Activated CD4-positive, alpha-beta memory T cell treated with anti-CD3 and anti-CD28 coated beads for 36 hours (primary cell): ENCODE measurements at regions of chrX and their contacts with region 1.

Region 1: GRCh38 chrX:112841114-112841819 is 636 bp upstream of the AMOT start:
- DNase-seq: peak; percentile 78
- H3K4me3 Mint-ChIP-seq: peak overlapping the region; percentile 80
- H3K27ac Mint-ChIP-seq: peak overlapping the region; percentile 49
- H3K4me1 Mint-ChIP-seq: peaks cover 13% of the 10 kb centered on the region
- H3K27me3 Mint-ChIP-seq: no peaks in the 10 kb centered on the region

Region 2: DNA sequence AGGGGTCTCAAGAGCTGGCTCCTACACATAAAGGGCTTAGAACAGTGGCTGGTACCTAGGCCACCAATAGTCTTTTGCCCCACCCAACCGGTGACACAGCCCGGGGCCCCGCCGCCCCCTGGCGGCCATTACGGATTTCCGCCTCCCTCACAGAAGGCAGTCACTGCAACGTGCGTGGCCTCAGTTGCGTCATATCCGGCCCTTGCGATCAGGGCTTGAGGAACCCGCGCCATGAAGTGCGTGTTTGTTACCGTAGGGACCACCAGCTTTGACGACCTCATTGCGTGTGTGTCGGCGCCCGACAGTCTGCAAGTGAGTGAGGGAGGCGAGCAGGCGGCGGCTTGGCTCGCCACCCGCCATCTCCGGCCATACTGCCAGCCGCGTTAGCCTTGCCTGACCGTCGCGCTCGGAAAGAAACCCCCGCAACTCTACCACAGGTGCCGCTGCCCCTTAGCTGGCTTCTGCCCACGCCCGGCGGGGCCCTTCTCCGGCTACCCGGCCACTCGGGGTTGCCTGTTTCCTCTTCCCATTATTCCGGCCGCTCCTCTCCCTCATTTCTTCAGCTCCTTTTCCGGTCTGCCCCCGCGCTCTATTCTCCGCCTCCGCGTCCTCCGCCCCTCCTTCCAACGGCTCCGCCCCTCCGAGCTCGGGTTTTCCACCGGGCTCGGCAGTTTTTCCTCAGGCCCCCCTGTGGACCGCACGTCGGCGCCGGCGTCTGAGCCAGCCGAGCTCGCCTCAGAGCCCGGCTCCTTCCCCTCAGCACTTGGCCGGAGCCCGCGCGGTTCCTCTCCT is 1160.1 kb before region 1 on chrX and contains the start of gene ALG13:
- CTCF ChIA-PET with region 1: no interaction called
- POLR2A ChIA-PET with region 1: no interaction called
- intact Hi-C with region 1: loop called (anchors 5 kb)
- DNase-seq: peak; percentile 89
- H3K4me3 Mint-ChIP-seq: peak within 1 kb of the TSS; percentile 81
- H3K27ac Mint-ChIP-seq: peak within 1 kb of the TSS; percentile 95
- H3K4me1 Mint-ChIP-seq: peaks cover 23% of the 10 kb centered on the region
- H3K27me3 Mint-ChIP-seq: no peaks in the 10 kb centered on the region
- total RNA-seq, gene ALG13: 40.1 to 45.4 TPM

Region 3: GRCh38 chrX:111928456-111928855 is 912.8 kb before region 1 on chrX:
- CTCF ChIA-PET with region 1: no interaction called
- POLR2A ChIA-PET with region 1: no interaction called
- intact Hi-C with region 1: no loop called
- DNase-seq: no peak
- H3K4me3 Mint-ChIP-seq: no peak overlapping the region
- H3K27ac Mint-ChIP-seq: no peak overlapping the region
- H3K4me1 Mint-ChIP-seq: no peaks in the 10 kb centered on the region
- H3K27me3 Mint-ChIP-seq: no peaks in the 10 kb centered on the region

Region 4: DNA sequence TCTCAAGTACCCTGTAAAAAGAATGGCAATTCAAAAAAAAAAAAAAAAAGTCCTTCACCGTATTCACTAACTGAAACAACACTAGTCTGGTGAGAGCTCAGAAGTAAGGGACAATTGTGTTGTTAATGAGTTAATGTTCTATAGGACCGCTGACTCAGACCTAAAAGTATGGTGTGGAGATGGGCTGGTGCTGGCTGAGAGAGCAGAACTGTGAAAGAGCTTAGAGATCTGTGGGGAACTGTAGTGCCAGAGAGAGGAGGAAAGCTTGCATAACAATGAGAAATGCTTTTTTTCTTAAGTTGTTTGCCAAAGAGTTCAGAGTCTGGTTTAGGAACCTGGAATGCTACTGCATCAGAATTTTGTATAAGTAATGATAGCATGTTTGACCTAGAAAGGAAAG is 226.6 kb before region 1 on chrX:
- CTCF ChIA-PET with region 1: no interaction called
- POLR2A ChIA-PET with region 1: no interaction called
- intact Hi-C with region 1: no loop called
- DNase-seq: no peak
- H3K4me3 Mint-ChIP-seq: no peak overlapping the region
- H3K27ac Mint-ChIP-seq: no peak overlapping the region
- H3K4me1 Mint-ChIP-seq: no peaks in the 10 kb centered on the region
- H3K27me3 Mint-ChIP-seq: no peaks in the 10 kb centered on the region

Region 5: DNA sequence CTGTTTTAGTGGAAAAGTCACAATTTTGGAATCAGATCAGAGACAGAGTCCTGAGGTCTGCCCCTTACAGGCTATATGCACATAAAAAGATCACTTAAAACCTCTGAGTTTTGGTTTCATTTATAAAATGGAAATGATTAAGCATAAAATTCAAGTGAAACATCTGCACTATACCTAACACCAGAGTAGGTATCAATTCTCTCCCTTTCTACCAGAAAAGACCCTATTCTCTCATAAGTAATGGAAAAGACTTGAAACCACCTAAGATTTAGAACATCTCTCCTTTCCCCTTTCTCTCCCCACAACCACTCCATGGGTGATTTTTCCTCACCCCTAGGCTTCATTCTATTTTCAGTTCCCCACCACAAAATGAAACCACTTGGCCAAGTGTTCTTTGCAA is 162.4 kb before region 1 on chrX:
- CTCF ChIA-PET with region 1: no interaction called
- POLR2A ChIA-PET with region 1: no interaction called
- intact Hi-C with region 1: loop called (anchors 2 kb)
- DNase-seq: no peak
- H3K4me3 Mint-ChIP-seq: peak overlapping the region; percentile 69
- H3K27ac Mint-ChIP-seq: peak overlapping the region; percentile 69
- H3K4me1 Mint-ChIP-seq: peaks cover 34% of the 10 kb centered on the region
- H3K27me3 Mint-ChIP-seq: no peaks in the 10 kb centered on the region